Activated T-helper 1 cell treated with anti-CD3 and anti-CD28 coated beads, Interleukin-12 subunit alpha, Interleukin-12 subunit beta, Interleukin-2, Interleukin-4 antibody, amounts not matched to agents 30 ng/mL and 10 ng/mL and 1 ng/mL, durations not matched to agents 14 hours and 24 hours and 36 hours (primary cell): ENCODE measurements at regions of chr4 and their contacts with region 1.

Region 1: GRCh38 chr4:33802578-33802977 is 2441.7 kb downstream of the ARAP2 start:
- DNase-seq: no peak
- H3K4me3 Mint-ChIP-seq: no peak overlapping the region
- H3K27ac Mint-ChIP-seq: no peak overlapping the region
- H3K4me1 Mint-ChIP-seq: no peaks in the 10 kb centered on the region
- H3K27me3 Mint-ChIP-seq: no peaks in the 10 kb centered on the region

Region 2: DNA sequence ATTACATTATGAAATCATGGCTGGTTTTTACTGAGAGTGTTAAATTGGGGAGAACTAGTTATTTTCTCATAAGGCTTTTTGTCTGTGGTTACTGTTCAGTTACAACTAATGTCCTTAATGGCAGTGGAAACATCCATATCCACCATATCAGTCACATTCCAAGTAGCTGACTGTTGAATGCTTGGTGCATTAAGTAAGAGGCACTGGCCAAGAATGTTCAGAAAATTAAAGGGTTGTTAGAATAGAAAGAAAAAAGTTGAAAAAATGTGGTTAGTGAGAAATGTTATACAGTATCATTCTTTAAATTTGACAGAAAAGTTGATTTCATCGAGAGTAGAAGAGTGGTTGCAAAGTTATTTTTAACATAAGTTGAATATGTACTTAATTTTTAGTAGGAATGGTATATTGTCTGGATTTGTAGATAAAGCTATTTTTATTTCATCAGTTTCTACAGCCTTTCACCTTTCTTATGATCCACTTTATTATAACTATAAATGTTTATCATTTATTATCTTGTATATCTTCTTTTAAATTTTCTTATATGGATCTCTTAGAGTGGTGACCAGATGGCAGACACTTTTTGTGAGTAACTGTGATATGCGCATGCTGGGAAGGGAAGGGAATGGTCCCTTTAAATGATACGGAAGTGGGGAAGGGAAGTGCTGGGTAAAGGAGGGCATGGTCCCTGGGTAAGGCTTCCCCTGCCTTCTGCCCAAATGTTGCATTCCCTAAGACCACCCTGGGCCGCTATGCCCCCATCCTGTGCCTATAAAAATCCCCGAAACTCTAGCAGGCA is 34.7 kb after region 1 on chr4:
- intact Hi-C with region 1: no loop called
- DNase-seq: no peak
- H3K4me3 Mint-ChIP-seq: no peak overlapping the region
- H3K27ac Mint-ChIP-seq: no peak overlapping the region
- H3K4me1 Mint-ChIP-seq: no peaks in the 10 kb centered on the region
- H3K27me3 Mint-ChIP-seq: no peaks in the 10 kb centered on the region

Region 3: GRCh38 chr4:33966808-33967207 is 164.2 kb after region 1 on chr4:
- intact Hi-C with region 1: no loop called
- DNase-seq: no peak
- H3K4me3 Mint-ChIP-seq: no peak overlapping the region
- H3K27ac Mint-ChIP-seq: no peak overlapping the region
- H3K4me1 Mint-ChIP-seq: no peaks in the 10 kb centered on the region
- H3K27me3 Mint-ChIP-seq: no peaks in the 10 kb centered on the region

Region 4: DNA sequence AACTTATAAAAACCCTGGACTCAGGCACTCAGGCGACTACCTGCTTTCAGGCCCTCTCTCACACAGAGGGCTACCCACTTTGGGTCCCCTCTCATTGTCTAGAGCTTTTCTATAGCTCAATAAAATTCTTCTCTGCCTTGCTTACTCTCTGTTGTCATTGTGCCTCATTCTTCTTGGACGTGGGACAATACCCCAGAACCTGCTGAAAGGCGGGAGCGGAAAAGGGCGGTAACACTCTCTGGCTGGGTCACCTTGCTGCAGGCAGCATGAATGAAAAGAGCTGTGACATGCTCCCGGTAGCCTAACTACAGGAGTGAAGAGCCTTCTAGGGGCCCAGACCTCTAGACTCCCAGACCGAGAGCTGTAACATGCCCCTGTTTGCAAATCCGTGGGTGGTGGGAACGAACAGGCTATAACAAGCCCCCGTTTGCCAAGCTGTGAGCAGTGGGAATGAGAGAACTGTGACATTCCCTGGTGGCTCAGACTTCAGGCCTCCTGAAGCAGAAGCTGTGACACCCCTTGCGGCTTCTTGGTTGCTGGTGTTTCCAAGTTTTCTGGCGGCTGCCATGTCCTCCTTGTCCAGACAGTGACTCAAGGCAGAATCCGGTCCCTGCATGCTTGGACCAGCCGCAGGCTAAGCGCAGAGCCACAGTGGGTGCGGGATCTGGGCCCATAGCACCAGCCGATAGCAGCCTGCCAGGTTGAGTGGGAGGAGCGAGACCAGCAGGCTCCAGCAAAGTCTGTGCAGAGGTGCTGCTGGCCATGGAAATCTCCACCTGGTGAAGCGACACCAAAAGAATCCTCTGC is 1757.2 kb after region 1 on chr4:
- intact Hi-C with region 1: loop called (anchors 10 kb)
- DNase-seq: no peak
- H3K4me3 Mint-ChIP-seq: no peak overlapping the region
- H3K27ac Mint-ChIP-seq: no peak overlapping the region
- H3K4me1 Mint-ChIP-seq: no peaks in the 10 kb centered on the region
- H3K27me3 Mint-ChIP-seq: no peaks in the 10 kb centered on the region